Endothelial cell of umbilical vein (primary cell): ENCODE measurements at regions of chr6 and their contacts with region 1.

Region 1: DNA sequence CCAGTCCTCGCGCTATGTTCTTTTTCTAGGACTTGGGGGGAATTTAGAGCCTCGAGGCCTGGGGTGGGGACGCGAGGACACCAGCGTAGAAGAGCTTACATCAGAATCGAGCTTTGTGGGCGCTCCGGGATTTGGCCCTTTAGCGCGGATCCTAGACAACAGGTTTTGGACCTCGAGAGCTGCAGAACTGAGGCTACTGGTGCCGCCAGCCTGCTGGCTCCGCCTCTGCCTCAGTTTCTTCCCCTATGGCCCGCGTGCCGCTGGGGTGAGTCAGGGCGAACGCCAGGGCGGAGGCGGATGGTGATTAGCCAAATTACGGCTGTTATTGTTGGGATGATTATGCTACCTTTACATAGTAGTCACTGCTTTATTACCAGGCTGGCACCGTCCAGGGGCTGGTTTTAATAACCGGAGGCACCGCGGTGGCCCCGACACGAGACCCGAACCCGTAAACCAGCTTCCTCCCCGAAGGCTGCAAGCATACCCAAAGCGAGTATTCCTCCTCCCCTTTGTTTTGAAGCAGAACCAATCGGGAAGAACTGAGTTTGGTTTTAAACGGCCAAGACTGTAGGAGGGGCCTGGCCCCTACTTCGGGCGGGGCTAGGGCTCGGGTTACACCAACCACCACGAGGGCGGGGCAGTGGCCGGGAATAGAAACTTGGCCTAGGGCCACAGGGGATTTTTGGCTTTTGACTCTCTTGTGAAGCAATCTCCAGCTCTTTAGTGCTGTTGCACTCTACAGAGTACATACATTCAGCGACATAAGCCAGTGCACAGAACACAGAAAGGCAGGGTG is 639 bp upstream of the GTPBP2 start:
- DNase-seq: peak; percentile 97
- H3K4me3 ChIP-seq: peak overlapping the region; percentile 4 to 89 (median 55)
- H3K27ac ChIP-seq: peak overlapping the region; percentile 65
- H3K4me1 ChIP-seq: peaks cover 25% of the 10 kb centered on the region
- H3K27me3 ChIP-seq: no peaks in the 10 kb centered on the region
- CTCF ChIP-seq: no peak
- POLR2A ChIP-seq: peak; percentile 49

Region 2: DNA sequence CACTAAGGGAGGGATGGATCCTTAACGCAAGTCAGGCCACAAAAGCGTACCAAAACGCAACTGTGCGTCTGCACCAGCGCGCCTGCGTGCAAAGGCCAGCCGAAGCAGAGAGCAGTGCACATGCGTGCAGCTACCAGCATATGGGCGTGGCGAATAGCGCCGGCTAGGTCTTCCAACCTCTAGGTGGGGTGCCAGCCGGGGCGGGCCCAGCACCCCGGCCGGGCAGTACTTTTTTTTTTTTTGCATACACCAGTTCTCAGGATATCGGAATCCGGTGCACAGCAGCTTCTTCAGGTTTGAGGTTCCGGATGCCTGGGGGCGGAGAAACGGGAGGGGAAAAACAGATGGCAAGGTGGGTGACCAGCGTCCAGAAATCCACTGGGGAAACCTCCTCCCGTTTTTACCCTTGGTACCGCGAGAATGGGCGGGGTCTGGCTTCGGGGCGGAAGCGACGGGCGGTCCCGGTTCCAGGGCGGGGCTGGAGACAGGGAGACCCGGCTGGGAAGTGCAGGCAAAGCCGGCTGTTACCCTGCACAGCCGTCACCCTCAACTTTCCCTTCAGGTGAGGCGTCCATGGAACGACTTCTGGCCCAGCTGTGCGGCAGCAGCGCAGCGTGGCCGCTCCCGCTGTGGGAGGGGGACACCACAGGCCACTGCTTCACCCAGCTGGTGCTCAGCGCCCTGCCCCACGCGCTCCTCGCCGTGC is 202.1 kb before region 1 on chr6 and contains the start of gene ABCC10:
- CTCF ChIA-PET with region 1: no interaction called
- POLR2A ChIA-PET with region 1: no interaction called
- dilution Hi-C with region 1: no loop called
- intact Hi-C with region 1: loop called (anchors 5 kb)
- DNase-seq: peak; percentile 95
- H3K4me3 ChIP-seq: peak within 1 kb of the TSS; percentile 14 to 66 (median 60)
- H3K27ac ChIP-seq: peak within 1 kb of the TSS; percentile 57
- H3K4me1 ChIP-seq: peaks cover 12% of the 10 kb centered on the region
- H3K27me3 ChIP-seq: no peaks in the 10 kb centered on the region
- CTCF ChIP-seq: peak in 1 of 2 donors; percentile 53
- POLR2A ChIP-seq: peak; percentile 94
- total RNA-seq, gene ABCC10: 34.8 and 37.9 TPM in 2 replicates

Region 3: GRCh38 chr6:43575772-43576551 is 53.7 kb before region 1 on chr6 and contains the starts of genes POLH and XPO5:
- CTCF ChIA-PET with region 1: no interaction called
- POLR2A ChIA-PET with region 1: interaction called, 4 read pairs
- dilution Hi-C with region 1: no loop called
- intact Hi-C with region 1: loop called (anchors 2 kb)
- DNase-seq: peak; percentile 96
- H3K4me3 ChIP-seq: peak within 1 kb of the TSS; percentile 76 to 89 (median 85)
- H3K27ac ChIP-seq: peak within 1 kb of the TSS; percentile 21
- H3K4me1 ChIP-seq: peaks cover 24% of the 10 kb centered on the region
- H3K27me3 ChIP-seq: no peaks in the 10 kb centered on the region
- CTCF ChIP-seq: no peak
- POLR2A ChIP-seq: peak; percentile 100
- total RNA-seq, gene POLH: 33.7 and 36.6 TPM in 2 replicates
- total RNA-seq, gene XPO5: 45.9 and 50.0 TPM in 2 replicates

Region 4: DNA sequence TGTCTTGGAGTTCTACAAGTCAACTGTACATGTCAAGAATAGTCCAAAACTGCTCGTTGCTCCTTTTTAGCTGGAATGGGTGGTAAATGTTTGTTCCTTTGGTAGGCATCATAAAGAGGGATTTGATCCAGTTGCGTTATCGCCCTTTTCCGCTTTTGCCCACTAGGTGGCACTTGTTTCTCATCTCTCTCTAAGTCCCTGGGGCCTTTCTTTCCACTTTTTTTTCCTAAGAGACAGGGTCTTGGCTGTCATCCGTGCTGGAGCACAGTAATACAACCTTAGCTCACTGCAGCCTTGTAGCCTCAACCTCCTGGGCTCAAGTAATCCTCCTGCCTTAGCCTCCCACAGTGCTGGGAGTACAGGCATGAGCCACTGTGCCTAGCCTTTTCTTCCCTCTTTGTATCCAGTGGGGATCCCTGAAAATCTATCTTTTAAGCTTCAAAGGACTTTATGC is 21.4 kb before region 1 on chr6:
- CTCF ChIA-PET with region 1: interaction called, 8 read pairs
- POLR2A ChIA-PET with region 1: interaction called, 4 read pairs
- dilution Hi-C with region 1: no loop called
- intact Hi-C with region 1: loop called (anchors 1 kb)
- DNase-seq: peak; percentile 82
- H3K4me3 ChIP-seq: no peak overlapping the region
- H3K27ac ChIP-seq: no peak overlapping the region
- H3K4me1 ChIP-seq: peaks cover 2% of the 10 kb centered on the region
- H3K27me3 ChIP-seq: no peaks in the 10 kb centered on the region
- CTCF ChIP-seq: peak; percentile 84 to 89
- POLR2A ChIP-seq: no peak